ENCODE measurements at regions of chr11 and their contacts with region 1.

Region 1: DNA sequence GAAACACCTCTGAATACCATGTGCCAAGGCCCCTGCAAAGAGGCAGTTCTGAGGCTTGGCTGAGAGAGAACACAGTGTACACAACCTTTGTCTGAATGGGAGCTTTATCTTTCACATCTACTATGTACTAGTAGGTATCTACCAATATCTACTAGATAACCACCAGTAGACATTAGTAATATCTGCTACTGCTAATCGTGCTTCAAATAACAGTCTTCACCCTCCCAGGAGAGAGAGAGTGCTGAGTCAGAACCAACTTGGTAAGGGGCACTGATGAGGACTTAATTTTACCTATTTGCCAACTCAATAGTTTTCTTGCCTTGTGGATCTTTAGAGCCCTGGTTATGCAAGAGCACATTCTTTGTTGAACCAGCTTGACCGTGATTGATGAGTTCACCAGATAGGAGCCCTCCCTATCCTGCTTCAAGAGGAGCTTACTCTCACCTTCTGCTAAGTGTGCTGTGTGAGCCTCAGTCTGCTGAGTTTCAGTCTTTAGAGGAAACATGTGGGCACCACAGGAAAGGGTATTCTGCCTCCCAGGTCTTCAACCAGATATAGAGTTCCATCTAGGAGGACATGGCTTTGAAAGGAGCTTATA is 967.5 kb downstream of the NTM start:
- DNase-seq: no peak
- ATAC-seq: no peak

Region 2: GRCh38 chr11:131349368-131350086 is 988.4 kb before region 1 on chr11:
- intact Hi-C with region 1: loop called (anchors 5 kb)
- DNase-seq: no peak
- ATAC-seq: no peak

Region 3: DNA sequence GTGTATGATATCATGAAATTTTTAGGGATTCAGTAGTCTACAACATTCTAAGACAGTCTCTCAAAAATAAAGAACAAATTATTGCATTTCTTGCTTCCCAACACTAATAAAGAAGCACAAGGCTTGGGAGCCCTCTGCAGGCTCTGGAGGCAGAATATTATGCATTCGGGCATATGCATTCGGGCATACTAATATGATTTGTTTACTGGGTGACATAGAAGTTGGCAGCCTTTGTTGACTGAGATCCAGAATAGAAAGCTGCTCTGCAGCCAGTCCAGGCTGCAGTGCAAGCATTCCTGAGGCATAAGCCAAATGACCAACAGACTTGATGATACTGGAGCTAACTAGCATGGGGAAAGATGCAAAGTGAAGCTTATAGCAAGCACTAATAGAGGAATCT is 248.9 kb after region 1 on chr11:
- intact Hi-C with region 1: no loop called
- DNase-seq: no peak
- ATAC-seq: no peak

Region 4: GRCh38 chr11:132920451-132921096 is 582.7 kb after region 1 on chr11:
- intact Hi-C with region 1: no loop called
- DNase-seq: no peak
- ATAC-seq: no peak

Region 5: GRCh38 chr11:134244655-134245054 is 1906.7 kb after region 1 on chr11:
- intact Hi-C with region 1: no loop called
- DNase-seq: no peak
- ATAC-seq: no peak

Measured in sciatic nerve (tissue), 2 donors.